Activated T-helper 1 cell treated with anti-CD3 and anti-CD28 coated beads, Interleukin-12 subunit alpha, Interleukin-12 subunit beta, Interleukin-2, Interleukin-4 antibody, amounts not matched to agents 30 ng/mL and 10 ng/mL and 1 ng/mL, durations not matched to agents 14 hours and 24 hours and 36 hours (primary cell): ENCODE measurements at regions of chr4 and their contacts with region 1.

Region 1: GRCh38 chr4:147096667-147097604 is 151.3 kb upstream of the TTC29 start:
- DNase-seq: no peak
- H3K4me3 Mint-ChIP-seq: no peak overlapping the region
- H3K27ac Mint-ChIP-seq: no peak overlapping the region
- H3K4me1 Mint-ChIP-seq: no peaks in the 10 kb centered on the region
- H3K27me3 Mint-ChIP-seq: peaks cover 12% of the 10 kb centered on the region

Region 2: GRCh38 chr4:145956288-145956890 is 1140.5 kb before region 1 on chr4:
- intact Hi-C with region 1: loop called (anchors 5 kb)
- DNase-seq: no peak
- H3K4me3 Mint-ChIP-seq: no peak overlapping the region
- H3K27ac Mint-ChIP-seq: no peak overlapping the region
- H3K4me1 Mint-ChIP-seq: peaks cover 5% of the 10 kb centered on the region
- H3K27me3 Mint-ChIP-seq: peaks cover 4% of the 10 kb centered on the region

Region 3: DNA sequence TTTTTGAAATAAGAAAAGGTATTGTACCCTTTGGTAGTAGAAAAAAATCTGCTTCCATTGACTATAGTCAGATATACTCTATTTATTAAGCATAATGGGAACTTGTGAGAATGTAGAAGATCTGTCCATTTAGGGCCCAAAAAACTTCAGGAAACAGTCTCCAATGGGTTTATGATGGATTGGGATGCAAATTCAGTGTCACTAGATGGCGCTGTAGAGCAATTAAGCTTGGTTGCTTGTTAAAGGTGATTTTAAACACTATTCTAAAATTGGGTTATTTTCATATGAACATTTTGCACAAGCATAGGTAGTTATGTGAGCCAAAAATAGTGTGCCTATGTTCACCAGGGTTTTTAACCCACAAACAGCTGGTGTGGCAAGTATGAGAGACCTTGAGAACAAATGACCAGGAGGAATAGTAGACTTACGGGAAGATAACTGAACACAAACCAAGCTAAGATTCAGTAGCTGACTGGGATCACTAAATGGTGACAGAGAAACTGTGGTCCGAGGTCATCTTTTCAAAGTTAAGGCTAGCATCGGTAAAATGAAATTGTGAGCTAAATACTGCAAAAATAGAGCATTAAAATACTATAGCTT is 1001.7 kb before region 1 on chr4:
- intact Hi-C with region 1: loop called (anchors 5 kb)
- DNase-seq: no peak
- H3K4me3 Mint-ChIP-seq: no peak overlapping the region
- H3K27ac Mint-ChIP-seq: no peak overlapping the region
- H3K4me1 Mint-ChIP-seq: peaks cover 4% of the 10 kb centered on the region
- H3K27me3 Mint-ChIP-seq: peaks cover 15% of the 10 kb centered on the region

Region 4: DNA sequence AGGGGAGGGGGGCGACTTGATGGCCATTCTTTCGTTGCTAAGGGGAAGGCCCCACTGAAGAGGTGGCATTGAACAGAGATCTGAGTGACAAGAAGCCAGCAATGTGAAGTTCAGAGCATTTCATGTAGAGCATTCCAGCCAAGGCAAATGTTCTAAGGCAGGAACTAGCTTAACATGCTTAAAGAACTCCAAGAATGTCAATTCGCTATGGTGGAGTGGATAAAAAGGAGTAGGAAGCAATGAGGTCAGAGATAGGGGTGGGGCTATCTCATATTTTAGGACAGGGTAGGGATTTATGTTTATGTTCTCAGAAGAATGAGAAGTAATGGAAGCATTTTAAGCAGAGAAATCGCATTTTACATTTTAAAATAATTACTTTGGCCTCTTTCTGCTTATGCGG is 282.2 kb before region 1 on chr4:
- intact Hi-C with region 1: no loop called
- DNase-seq: no peak
- H3K4me3 Mint-ChIP-seq: no peak overlapping the region
- H3K27ac Mint-ChIP-seq: no peak overlapping the region
- H3K4me1 Mint-ChIP-seq: no peaks in the 10 kb centered on the region
- H3K27me3 Mint-ChIP-seq: no peaks in the 10 kb centered on the region

Region 5: DNA sequence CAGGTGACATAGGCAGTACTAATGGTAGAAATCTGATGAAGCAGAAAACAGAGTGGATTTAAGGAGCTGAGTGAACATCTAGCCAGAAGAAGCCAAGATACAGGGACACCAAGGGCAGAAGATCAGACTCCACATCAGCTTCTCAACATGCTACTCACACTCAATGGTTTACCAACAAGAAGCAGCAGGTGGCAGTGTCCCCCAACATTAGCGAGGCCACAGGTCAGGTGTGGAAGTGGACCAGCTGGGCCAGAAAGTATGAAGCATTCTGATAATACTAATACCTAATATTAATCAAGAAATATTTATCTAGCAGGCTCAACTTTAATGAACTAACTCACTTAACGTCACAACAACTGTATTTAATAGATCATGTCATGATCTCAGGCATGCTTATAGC is 77.9 kb before region 1 on chr4:
- intact Hi-C with region 1: loop called (anchors 1 kb)
- DNase-seq: peak; percentile 11
- H3K4me3 Mint-ChIP-seq: no peak overlapping the region
- H3K27ac Mint-ChIP-seq: no peak overlapping the region
- H3K4me1 Mint-ChIP-seq: no peaks in the 10 kb centered on the region
- H3K27me3 Mint-ChIP-seq: no peaks in the 10 kb centered on the region